H1 (cell line): ENCODE measurements at regions of chr19 and their contacts with region 1.

Region 1: DNA sequence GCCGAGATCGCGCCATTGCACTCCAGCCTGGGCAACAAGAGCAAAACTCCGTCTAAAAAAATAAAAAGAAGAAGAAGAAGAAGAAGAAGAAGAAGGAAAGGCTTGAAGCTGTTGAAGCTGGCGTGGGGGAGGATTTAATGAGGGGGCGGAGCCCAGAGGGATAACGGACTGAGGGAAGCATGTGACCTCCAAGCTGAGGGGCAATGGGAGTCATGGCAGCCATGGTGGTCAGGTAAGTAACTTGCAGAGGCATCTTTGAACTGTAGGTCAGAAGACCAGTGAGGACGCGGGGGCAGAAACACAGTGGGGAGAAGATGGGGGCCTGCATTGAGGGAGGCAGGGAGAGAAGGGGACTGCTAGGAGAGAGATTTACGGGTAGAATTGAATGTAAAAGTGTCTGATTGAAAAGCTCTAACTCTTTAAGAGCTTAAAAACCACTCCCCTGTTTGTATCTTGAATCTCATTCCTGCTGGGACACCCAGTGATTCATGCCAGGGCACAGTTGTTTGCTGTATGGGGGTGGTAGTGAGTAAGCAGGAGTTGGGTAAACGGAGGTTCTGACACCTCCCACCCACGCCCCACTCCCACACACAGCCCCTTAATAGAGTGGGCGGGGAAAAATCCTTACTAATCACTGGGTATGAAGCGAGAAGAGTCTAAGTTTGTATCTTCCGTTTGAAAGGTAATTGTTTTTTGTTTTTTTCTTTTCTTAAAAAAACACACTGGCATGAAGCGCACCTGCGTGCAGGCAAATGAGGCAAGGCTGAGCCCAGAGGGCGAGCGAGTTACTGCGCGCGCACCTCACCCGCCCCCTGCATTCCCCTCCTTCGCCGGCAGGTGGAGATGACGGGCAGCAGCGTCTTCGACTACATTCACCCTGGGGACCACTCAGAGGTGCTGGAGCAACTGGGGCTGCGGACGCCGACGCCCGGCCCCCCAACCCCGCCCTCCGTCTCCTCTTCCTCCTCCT is 13.0 kb downstream of the TMEM160 start:
- DNase-seq: peak in 1 of 2 experiments; percentile 100
- H3K4me3 ChIP-seq: peak overlapping the region; percentile 23 to 65 (median 47); a peak in 7 of 8 replicates
- H3K27ac ChIP-seq: no peak overlapping the region
- H3K4me1 ChIP-seq: peaks cover 3 to 7% (median 6%) of the 10 kb centered on the region in 4 experiments; a peak in 6 of 7 replicates
- H3K27me3 ChIP-seq: no peaks in the 10 kb centered on the region; a peak in 1 of 7 replicates
- CTCF ChIP-seq: peak; percentile 79 to 94 (median 91)
- EP300 ChIP-seq: no peak
- POLR2A ChIP-seq: no peak
- RAD21 ChIP-seq: peak; percentile 61 to 63

Region 2: DNA sequence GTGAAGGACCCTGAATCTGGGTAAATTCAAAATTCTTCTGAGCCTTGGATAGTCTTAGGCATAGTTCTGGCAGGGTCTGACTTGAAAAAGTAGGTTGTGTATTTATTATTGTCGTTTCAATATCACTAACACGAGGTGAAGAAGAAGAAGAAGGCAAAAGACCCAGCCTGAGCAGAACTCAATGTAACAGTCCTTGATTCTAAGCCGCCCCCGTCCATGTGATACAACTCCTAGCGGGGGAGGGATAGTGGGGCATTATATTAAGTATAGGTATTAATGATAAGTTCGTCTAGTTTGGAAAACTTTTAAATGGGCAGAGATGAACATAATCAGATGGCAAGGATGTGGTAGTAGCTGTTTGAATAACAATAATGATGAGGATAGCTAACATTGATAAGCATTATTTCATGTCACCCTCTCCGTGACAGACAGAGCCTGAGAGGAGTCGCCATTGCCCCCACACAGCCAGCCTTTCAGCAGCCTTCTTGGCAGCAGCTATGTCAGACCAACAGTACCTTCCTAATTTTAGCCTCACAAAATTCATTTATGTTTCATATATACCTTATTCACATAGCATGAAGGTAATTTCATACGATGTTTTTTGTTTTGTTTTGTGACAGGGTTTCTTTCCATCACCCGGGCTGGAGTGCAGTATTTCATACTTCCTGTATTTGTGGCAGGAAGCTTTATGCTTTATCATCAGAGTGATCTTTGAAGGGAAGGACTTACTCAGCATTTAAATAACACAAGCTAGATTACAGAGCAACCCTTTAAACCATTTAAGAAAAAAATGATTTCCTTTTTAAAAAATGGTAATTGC is 80.2 kb before region 1 on chr19:
- CTCF ChIA-PET with region 1: no interaction called
- POLR2A ChIA-PET with region 1: no interaction called
- DNase-seq: no peak
- H3K4me3 ChIP-seq: no peak overlapping the region
- H3K27ac ChIP-seq: no peak overlapping the region
- H3K4me1 ChIP-seq: peaks cover 0 to 4% (median 0%) of the 10 kb centered on the region in 4 experiments; a peak in 1 of 7 replicates
- H3K27me3 ChIP-seq: no peaks in the 10 kb centered on the region
- CTCF ChIP-seq: no peak
- EP300 ChIP-seq: no peak
- POLR2A ChIP-seq: no peak
- RAD21 ChIP-seq: no peak

Region 3: GRCh38 chr19:47019431-47020041 is 15.9 kb before region 1 on chr19 and contains the start of gene NPAS1:
- CTCF ChIA-PET with region 1: interaction called, 48 read pairs
- POLR2A ChIA-PET with region 1: interaction called, 4 read pairs
- DNase-seq: peak in 1 of 2 experiments; percentile 84
- H3K4me3 ChIP-seq: peak within 1 kb of the TSS; percentile 42 to 69 (median 46)
- H3K27ac ChIP-seq: no peak within 1 kb of the TSS
- H3K4me1 ChIP-seq: peaks cover 0 to 20% (median 11%) of the 10 kb centered on the region in 4 experiments; a peak in 5 of 7 replicates
- H3K27me3 ChIP-seq: peaks cover 24 to 53% (median 49%) of the 10 kb centered on the region in 4 experiments
- CTCF ChIP-seq: no peak
- EP300 ChIP-seq: no peak
- POLR2A ChIP-seq: no peak
- RAD21 ChIP-seq: no peak
- total RNA-seq, gene NPAS1: 9.0 and 9.9 TPM in 2 replicates

Region 4: DNA sequence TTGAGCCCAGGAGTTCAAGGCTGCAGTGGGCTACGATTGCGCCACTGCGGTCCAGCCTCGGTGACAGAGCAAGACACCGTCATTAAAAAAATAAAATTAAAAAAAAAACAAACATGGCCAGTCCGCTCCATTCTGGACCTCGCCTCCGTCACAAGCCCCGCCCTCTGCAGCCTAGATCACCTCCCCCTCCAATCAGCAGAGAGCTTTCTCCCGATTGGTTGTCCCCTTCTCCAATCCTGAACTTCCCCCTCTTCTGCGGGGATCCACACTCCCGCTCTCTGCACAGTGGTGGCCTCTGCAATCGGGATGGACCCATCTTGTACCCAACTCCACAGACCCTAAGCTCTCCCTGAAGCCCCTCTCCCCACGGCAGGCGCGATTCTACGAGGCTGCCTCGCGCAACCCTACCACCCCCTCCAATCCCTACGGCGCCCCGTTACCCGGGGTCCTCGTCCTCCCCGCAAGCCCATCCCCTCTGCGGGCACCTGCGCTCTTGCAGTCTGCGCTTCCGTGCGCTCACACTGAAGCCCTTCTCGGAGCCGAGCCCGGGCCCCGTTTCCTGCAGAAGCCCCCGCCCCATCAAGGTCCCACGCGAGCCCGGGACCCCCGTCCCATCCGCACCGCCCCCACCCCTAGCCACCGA is 12.5 kb after region 1 on chr19:
- CTCF ChIA-PET with region 1: interaction called, 16 read pairs
- POLR2A ChIA-PET with region 1: interaction called, 17 read pairs
- DNase-seq: peak; percentile 63 to 91
- H3K4me3 ChIP-seq: peak overlapping the region; percentile 62 to 88 (median 80)
- H3K27ac ChIP-seq: no peak overlapping the region
- H3K4me1 ChIP-seq: peaks cover 0 to 5% (median 4%) of the 10 kb centered on the region in 4 experiments; a peak in 3 of 7 replicates
- H3K27me3 ChIP-seq: no peaks in the 10 kb centered on the region
- CTCF ChIP-seq: no peak
- EP300 ChIP-seq: no peak
- POLR2A ChIP-seq: no peak; a peak in 1 of 3 replicates
- RAD21 ChIP-seq: no peak

Region 5: GRCh38 chr19:47084879-47085439 is 49.5 kb after region 1 on chr19:
- CTCF ChIA-PET with region 1: no interaction called
- POLR2A ChIA-PET with region 1: no interaction called
- DNase-seq: no peak
- H3K4me3 ChIP-seq: no peak overlapping the region
- H3K27ac ChIP-seq: no peak overlapping the region
- H3K4me1 ChIP-seq: no peaks in the 10 kb centered on the region
- H3K27me3 ChIP-seq: no peaks in the 10 kb centered on the region; a peak in 1 of 7 replicates
- CTCF ChIP-seq: no peak
- EP300 ChIP-seq: no peak
- POLR2A ChIP-seq: no peak
- RAD21 ChIP-seq: no peak